HCT116 (cell line): ENCODE measurements at regions of chr5 and their contacts with region 1.

Region 1: GRCh38 chr5:82165740-82166530 is 112.2 kb downstream of the RPS23 start:
- DNase-seq: peak; percentile 59
- ATAC-seq: peak; percentile 93
- H3K4me3 ChIP-seq: no peak overlapping the region
- H3K27ac ChIP-seq: no peak overlapping the region
- H3K4me1 ChIP-seq: no peaks in the 10 kb centered on the region
- H3K27me3 ChIP-seq: no peaks in the 10 kb centered on the region
- CTCF ChIP-seq: peak; percentile 51 to 73 (median 67)
- POLR2A ChIP-seq: no peak
- RAD21 ChIP-seq: peak; percentile 88

Region 2: DNA sequence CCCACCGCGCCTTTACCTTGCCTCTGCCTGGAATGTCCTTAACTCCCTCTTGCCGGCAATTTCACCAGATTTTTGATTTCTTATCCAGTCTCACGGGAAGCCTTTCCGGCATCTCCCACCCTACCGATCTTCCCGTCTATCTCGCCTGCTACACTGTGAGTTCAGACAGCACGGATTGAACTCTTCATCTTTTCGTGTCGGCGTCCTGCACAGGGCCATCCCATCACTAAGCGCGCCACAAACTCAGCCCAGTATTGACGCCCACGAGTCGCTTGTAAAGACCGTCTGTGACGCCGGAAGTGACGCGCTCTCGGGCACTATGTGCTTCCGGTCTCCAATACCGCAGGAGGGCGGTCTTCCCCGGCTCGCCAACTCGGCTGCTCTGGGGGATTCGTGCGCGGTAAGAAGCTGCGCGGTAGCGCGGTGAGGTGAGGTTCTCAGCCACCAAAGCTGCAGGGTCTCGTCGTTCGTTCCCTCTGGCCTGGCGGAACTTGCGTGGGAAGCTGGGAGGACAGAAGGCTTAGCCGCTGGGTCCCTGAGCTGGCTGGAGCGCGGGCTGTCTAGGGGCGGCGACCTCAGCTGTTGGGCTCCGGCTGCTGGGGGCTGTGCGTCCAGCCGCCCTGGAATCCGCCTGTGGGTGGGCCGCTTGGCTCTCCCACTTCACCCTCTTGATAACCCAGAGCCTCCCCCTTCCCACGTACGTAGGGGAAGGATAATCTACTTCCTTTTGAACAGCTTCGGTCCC is 864.5 kb before region 1 on chr5 and contains the start of gene ZCCHC9:
- CTCF ChIA-PET with region 1: interaction called, 7 read pairs
- POLR2A ChIA-PET with region 1: no interaction called
- RAD21 ChIA-PET with region 1: no interaction called
- intact Hi-C with region 1: loop called (anchors 5 kb)
- DNase-seq: peak; percentile 90
- ATAC-seq: peak; percentile 89
- H3K4me3 ChIP-seq: peak within 1 kb of the TSS; percentile 82 to 90
- H3K27ac ChIP-seq: peak within 1 kb of the TSS; percentile 77
- H3K4me1 ChIP-seq: peaks cover 7 to 22% of the 10 kb centered on the region in 2 experiments; a peak in 2 of 4 replicates
- H3K27me3 ChIP-seq: no peaks in the 10 kb centered on the region
- CTCF ChIP-seq: no peak
- POLR2A ChIP-seq: peak; percentile 96
- RAD21 ChIP-seq: no peak
- total RNA-seq, gene ZCCHC9: 33.7 TPM

Region 3: GRCh38 chr5:81425569-81425968 is 740.4 kb before region 1 on chr5:
- CTCF ChIA-PET with region 1: interaction called, 32 read pairs
- POLR2A ChIA-PET with region 1: no interaction called
- RAD21 ChIA-PET with region 1: no interaction called
- intact Hi-C with region 1: loop called (anchors 1 kb)
- DNase-seq: peak; percentile 28
- ATAC-seq: peak; percentile 67; the same call in 1 of the 2 replicates
- H3K4me3 ChIP-seq: no peak overlapping the region
- H3K27ac ChIP-seq: no peak overlapping the region
- H3K4me1 ChIP-seq: peaks cover 0 to 3% of the 10 kb centered on the region in 2 experiments; a peak in 2 of 4 replicates
- H3K27me3 ChIP-seq: no peaks in the 10 kb centered on the region
- CTCF ChIP-seq: peak; percentile 39 to 64 (median 54); a peak in 4 of 6 replicates
- POLR2A ChIP-seq: no peak
- RAD21 ChIP-seq: peak; percentile 61

Region 4: GRCh38 chr5:81506900-81507588 is 658.9 kb before region 1 on chr5:
- CTCF ChIA-PET with region 1: interaction called, 8 read pairs
- POLR2A ChIA-PET with region 1: no interaction called
- RAD21 ChIA-PET with region 1: no interaction called
- intact Hi-C with region 1: loop called (anchors 1 kb)
- DNase-seq: peak; percentile 77
- ATAC-seq: peak; percentile 99
- H3K4me3 ChIP-seq: no peak overlapping the region
- H3K27ac ChIP-seq: no peak overlapping the region
- H3K4me1 ChIP-seq: peaks cover 0 to 5% of the 10 kb centered on the region in 2 experiments; a peak in 2 of 4 replicates
- H3K27me3 ChIP-seq: no peaks in the 10 kb centered on the region
- CTCF ChIP-seq: peak; percentile 76 to 91 (median 84)
- POLR2A ChIP-seq: no peak
- RAD21 ChIP-seq: peak; percentile 92

Region 5: GRCh38 chr5:81851481-81852178 is 314.3 kb before region 1 on chr5:
- CTCF ChIA-PET with region 1: interaction called, 17 read pairs
- POLR2A ChIA-PET with region 1: interaction called, 5 read pairs
- RAD21 ChIA-PET with region 1: interaction called in 1 of 2 experiments, 4 read pairs
- intact Hi-C with region 1: loop called (anchors 1 kb)
- DNase-seq: peak; percentile 84
- ATAC-seq: peak; percentile 82
- H3K4me3 ChIP-seq: peak overlapping the region; percentile 42 to 56
- H3K27ac ChIP-seq: peak overlapping the region; percentile 81
- H3K4me1 ChIP-seq: peaks cover 40 to 52% of the 10 kb centered on the region in 2 experiments
- H3K27me3 ChIP-seq: no peaks in the 10 kb centered on the region
- CTCF ChIP-seq: no peak
- POLR2A ChIP-seq: peak; percentile 47
- RAD21 ChIP-seq: peak; percentile 35

Region 6: DNA sequence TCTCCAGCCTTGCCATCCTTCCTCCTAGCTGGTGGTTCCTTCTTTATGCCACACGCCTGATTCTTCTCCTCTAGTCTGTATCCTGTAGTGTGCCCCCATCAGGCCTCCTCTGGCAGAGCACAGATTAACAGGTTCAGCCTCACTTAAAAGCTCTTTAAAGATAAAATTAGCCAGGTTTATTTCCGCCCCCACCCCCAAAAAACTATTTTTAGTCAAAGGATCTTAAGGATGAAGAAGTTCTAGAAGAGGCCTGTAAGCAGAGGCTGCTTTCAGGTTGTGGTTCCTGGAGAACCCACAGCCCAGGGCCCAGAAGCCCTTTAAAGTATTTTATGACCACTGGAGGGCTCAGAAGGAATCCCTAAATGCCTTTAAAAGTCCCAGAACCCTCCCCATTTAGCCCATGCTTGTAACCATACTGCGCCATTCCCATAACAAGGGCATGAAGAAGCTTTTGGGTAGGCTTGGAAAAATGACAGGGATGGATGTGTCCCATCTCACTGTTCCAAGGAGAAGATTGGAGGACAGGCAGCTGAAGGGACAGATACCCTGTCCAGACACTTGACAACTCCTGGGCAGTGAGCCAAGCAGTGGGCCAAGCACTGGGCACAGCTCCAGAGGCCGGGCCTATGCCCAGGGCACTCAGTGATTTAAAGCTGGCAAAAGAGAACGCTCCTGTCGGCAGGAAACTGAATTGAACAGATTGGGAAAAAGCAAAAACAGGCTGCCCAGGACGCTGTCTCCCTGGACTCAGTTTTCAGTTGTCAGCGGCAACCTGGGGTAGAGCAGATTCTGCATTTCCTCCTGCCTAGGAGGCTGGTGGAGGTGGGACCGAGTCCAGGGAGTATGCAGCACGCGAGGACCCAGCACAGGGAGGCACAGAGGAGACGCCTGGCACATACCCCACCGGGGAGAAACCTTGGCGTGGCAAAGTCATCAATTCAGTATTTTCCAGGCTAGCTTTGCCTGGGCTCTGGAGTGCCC is 308.7 kb before region 1 on chr5:
- CTCF ChIA-PET with region 1: interaction called, 17 read pairs
- POLR2A ChIA-PET with region 1: interaction called, 5 read pairs
- RAD21 ChIA-PET with region 1: interaction called in 1 of 2 experiments, 4 read pairs
- intact Hi-C with region 1: loop called (anchors 1 kb)
- DNase-seq: no peak
- ATAC-seq: peak; percentile 79
- H3K4me3 ChIP-seq: no peak overlapping the region
- H3K27ac ChIP-seq: no peak overlapping the region
- H3K4me1 ChIP-seq: peaks cover 30 to 36% of the 10 kb centered on the region in 2 experiments
- H3K27me3 ChIP-seq: no peaks in the 10 kb centered on the region
- CTCF ChIP-seq: peak; percentile 45 to 67 (median 65); a peak in 5 of 6 replicates
- POLR2A ChIP-seq: no peak
- RAD21 ChIP-seq: peak; percentile 32; the same call in 1 of the 2 replicates

Region 7: DNA sequence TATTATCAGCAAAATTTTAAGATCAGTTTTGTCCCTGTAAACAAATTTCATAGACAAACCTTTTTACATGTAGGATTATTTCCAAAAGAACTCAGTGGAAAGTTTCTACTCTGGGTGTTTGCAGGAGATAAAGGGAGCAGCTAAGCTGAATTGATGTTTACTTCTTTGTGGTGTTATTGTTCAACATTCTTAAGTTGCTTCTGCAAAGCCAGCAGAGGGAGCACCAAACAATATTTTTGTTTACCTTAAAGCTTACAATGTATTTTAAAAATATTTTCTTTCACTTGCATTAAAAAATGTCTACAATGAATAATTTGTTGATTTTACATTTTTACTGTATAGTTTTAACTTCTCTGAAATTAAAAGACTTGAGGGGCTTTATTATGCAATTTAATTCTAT is 58.7 kb before region 1 on chr5:
- CTCF ChIA-PET with region 1: interaction called, 41 read pairs
- POLR2A ChIA-PET with region 1: no interaction called
- RAD21 ChIA-PET with region 1: interaction called, 3 to 4 read pairs
- intact Hi-C with region 1: loop called (anchors 5 kb)
- DNase-seq: no peak
- ATAC-seq: no peak
- H3K4me3 ChIP-seq: no peak overlapping the region
- H3K27ac ChIP-seq: no peak overlapping the region
- H3K4me1 ChIP-seq: no peaks in the 10 kb centered on the region
- H3K27me3 ChIP-seq: no peaks in the 10 kb centered on the region
- CTCF ChIP-seq: peak in 2 of 3 experiments; percentile 52; a peak in 4 of 6 replicates
- POLR2A ChIP-seq: no peak
- RAD21 ChIP-seq: peak; percentile 37